ENCODE measurements at regions of chr1 and their contacts with region 1.

Region 1: DNA sequence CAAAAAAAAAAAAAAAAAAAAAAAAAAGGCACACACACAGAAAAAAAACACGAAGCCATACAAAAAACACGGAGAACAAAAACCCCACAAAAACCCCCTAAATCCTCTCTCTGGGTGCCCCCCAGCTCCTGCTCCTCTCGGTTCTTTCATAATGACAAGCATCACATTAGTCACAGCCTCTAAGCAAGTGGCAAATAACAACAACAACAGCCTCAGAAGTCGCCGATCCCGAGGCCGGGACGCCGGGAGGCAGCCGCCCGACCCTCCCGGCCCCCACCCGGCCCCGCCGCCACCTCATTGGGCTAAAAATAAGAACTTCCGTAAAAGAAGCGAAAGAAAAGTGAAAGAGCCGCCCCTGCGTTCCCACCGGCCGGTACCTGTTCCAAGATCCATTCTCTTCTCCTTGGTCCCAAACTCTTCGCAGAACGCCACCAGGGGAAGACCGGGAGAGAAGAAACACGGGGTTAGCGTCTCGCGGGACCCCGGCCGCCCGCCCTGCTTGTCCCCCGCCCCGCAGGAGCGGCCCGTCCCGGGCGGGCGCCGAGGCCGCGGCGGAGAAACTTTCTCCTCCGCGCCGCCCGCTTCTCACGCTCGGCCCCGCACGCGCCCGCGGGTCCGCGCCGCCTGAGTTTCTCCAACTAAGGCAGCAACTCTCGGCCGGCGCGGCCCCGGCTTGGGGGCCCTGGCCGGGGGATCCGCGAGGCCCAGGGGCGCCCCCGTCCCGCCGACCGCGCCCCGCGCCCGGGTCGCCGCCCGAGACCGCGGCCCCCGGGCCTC is 102.8 kb downstream of the CASZ1 start:
- DNase-seq: peak; percentile 71
- CTCF ChIP-seq: no peak

Region 2: DNA sequence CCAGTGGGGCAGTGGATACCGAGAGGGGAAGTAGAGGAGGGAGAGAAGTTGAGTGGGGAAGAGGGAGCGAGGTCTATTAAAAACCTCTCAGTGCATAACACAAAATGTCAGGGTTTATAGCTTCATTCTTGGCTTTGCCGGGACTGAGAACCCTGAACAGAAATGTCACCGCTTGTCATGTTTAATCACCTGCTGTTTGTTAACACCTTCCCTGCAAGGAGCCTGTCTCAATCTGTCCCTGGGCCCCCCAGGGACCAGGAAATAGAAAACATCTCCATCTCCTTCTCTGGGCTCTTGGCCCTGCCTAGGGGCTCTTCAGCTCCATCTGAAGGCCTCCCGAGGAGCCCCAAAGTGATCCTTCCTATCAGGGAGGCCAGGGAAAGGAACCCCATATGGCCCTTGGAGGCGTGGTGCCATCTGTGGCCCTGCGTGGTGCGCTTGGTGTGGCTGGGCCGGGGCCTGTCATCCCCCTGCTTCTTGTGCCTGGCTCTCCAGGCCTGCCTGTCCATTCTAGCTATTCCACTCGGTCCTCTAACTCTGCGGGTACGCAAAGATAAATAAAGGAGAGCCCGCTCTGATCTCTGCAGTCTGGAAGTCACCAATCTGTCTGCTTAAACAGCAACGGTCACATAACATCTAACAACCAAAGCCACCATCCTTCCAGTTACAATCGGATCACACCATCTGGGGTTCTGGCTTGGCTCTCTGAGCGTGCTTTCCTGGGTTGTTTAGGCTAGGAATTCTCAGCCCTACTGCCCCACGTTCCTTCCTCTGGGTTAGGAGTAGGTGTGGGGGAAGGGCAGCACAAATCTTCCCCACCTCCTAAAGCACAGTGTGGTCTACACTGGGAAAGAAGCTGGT is 11.0 kb before region 1 on chr1:
- CTCF ChIA-PET with region 1: interaction called, 11 read pairs
- POLR2A ChIA-PET with region 1: no interaction called
- DNase-seq: no peak
- CTCF ChIP-seq: no peak

Region 3: DNA sequence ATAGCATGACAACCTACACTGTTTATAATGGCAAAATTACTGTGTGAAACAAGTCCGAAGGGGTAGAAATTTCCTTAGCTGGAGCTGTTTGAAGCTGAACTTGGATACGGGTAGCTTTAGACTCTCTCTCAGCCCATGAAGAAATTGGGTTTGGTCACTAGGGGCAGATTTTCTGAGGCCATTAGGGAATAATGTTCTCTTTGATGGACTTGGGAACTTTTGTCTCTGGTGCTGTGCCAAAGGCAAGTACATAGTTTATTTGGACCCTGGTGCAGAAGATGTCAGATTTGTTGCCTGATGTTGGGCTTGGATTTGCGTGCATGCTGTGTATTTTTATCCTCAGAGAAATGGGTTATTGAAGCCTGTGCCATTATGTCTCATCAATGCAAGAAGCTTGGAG is 1645.7 kb after region 1 on chr1:
- CTCF ChIA-PET with region 1: no interaction called
- POLR2A ChIA-PET with region 1: interaction called, 11 read pairs
- DNase-seq: no peak
- CTCF ChIP-seq: no peak